ENCODE measurements at regions of chr13 and their contacts with region 1.

Region 1: DNA sequence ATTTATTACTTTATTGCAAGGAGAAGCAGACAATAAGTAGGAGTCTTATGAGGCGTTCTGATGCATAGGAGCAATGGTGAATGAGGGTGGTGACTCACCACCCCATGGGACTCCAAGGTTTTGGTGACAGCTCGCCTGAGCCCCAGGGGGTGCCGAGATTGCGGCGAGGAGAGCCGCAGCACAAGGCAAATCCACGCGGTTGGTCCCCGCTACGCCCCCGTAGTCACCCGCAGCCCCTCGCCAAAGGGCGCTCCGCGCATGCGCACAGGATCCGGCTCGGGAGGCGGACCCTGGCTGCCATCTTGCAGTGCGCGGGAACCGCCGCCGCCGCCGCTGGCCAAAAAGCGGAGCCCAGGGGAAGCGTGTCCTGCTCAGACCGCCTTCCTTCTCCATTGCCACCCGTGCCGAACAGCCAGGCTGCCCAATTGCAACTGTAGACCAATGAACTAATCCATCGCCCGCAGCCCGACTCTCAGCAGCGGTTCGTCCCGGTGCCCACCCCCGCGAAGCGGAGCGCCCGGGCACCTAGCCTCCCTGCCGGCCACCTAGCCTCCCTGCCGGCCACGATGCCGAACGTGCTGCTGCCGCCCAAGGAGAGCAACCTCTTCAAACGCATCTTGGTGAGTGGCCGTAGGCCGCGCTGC is at the start of gene NAA16:
- DNase-seq: peak; percentile 87 to 98 (median 95)
- ATAC-seq: peak; percentile 88
- H3K4me3 ChIP-seq: peak within 1 kb of the TSS; percentile 72 to 97
- H3K4me3 Mint-ChIP-seq: peak within 1 kb of the TSS; percentile 98
- H3K27ac ChIP-seq: peak within 1 kb of the TSS; percentile 72 to 83
- H3K27ac Mint-ChIP-seq: peak within 1 kb of the TSS; percentile 96
- H3K4me1 ChIP-seq: peaks cover 25% of the 10 kb centered on the region
- H3K4me1 Mint-ChIP-seq: peaks cover 41% of the 10 kb centered on the region
- H3K27me3 ChIP-seq: no peaks in the 10 kb centered on the region
- H3K27me3 Mint-ChIP-seq: no peaks in the 10 kb centered on the region
- CTCF ChIP-seq: no peak
- total RNA-seq, gene NAA16: 103 to 105 TPM

Region 2: DNA sequence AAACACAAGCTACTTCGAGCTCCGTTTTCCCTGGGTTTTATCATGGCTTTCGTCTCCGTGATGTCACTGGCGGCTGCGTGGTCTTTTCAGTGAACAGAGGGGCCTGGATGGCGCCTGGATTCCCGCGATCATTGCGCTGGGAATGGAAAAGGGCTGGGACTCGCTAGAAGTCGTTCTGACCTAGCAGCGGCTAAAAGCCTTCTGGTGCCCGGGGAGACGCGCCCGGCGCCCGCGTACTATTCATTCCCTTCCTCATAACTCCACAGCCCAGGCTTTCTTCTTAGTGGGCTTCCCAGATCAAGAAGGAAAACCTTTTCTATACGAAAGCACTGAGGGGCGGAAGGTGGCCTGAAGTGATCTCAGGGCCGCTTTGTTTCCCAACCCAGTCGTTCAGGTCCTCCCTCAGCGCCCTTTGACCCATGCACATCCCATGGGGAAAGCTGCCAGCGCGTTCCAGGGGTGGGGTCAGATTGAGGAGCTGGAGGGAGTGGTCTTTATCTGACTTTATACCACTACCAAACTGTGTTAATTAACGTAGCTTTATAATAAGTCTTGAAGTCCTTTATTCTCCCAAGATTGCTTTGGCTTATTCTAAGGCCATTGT is 388.5 kb before region 1 on chr13:
- CTCF ChIA-PET with region 1: no interaction called
- POLR2A ChIA-PET with region 1: no interaction called
- intact Hi-C with region 1: loop called in 1 of 2 experiments (anchors 10 kb)
- DNase-seq: peak in 2 of 9 experiments; percentile 17 to 30
- ATAC-seq: no peak
- H3K4me3 ChIP-seq: no peak overlapping the region
- H3K4me3 Mint-ChIP-seq: peak overlapping the region; percentile 59
- H3K27ac ChIP-seq: no peak overlapping the region
- H3K27ac Mint-ChIP-seq: peak overlapping the region; percentile 82
- H3K4me1 ChIP-seq: peaks cover 8% of the 10 kb centered on the region
- H3K4me1 Mint-ChIP-seq: peaks cover 27% of the 10 kb centered on the region
- H3K27me3 ChIP-seq: no peaks in the 10 kb centered on the region
- H3K27me3 Mint-ChIP-seq: no peaks in the 10 kb centered on the region
- CTCF ChIP-seq: no peak

Region 3: GRCh38 chr13:41193919-41194824 is 116.9 kb before region 1 on chr13 and contains the start of gene KBTBD7:
- CTCF ChIA-PET with region 1: no interaction called
- POLR2A ChIA-PET with region 1: no interaction called
- intact Hi-C with region 1: loop called in 1 of 2 experiments (anchors 1 kb)
- DNase-seq: peak; percentile 74 to 93 (median 90)
- ATAC-seq: peak; percentile 95
- H3K4me3 ChIP-seq: peak within 1 kb of the TSS; percentile 67 to 97
- H3K4me3 Mint-ChIP-seq: peak within 1 kb of the TSS; percentile 92
- H3K27ac ChIP-seq: peak within 1 kb of the TSS; percentile 53 to 68
- H3K27ac Mint-ChIP-seq: peak within 1 kb of the TSS; percentile 93
- H3K4me1 ChIP-seq: peaks cover 14% of the 10 kb centered on the region
- H3K4me1 Mint-ChIP-seq: peaks cover 39% of the 10 kb centered on the region
- H3K27me3 ChIP-seq: no peaks in the 10 kb centered on the region
- H3K27me3 Mint-ChIP-seq: no peaks in the 10 kb centered on the region
- CTCF ChIP-seq: no peak
- total RNA-seq, gene KBTBD7: 2.2 to 2.3 TPM

Region 4: GRCh38 chr13:41271456-41272285 is 39.4 kb before region 1 on chr13:
- CTCF ChIA-PET with region 1: interaction called, 3 read pairs
- POLR2A ChIA-PET with region 1: interaction called, 4 read pairs
- intact Hi-C with region 1: loop called in 1 of 2 experiments (anchors 2 kb)
- DNase-seq: peak in 5 of 9 experiments; percentile 6 to 74 (median 48)
- ATAC-seq: peak; percentile 83
- H3K4me3 ChIP-seq: peak overlapping the region in 1 of 2 experiments; percentile 12
- H3K4me3 Mint-ChIP-seq: peak overlapping the region; percentile 59
- H3K27ac ChIP-seq: peak overlapping the region; percentile 36 to 49
- H3K27ac Mint-ChIP-seq: peak overlapping the region; percentile 91
- H3K4me1 ChIP-seq: peaks cover 43% of the 10 kb centered on the region
- H3K4me1 Mint-ChIP-seq: peaks cover 38% of the 10 kb centered on the region
- H3K27me3 ChIP-seq: no peaks in the 10 kb centered on the region
- H3K27me3 Mint-ChIP-seq: no peaks in the 10 kb centered on the region
- CTCF ChIP-seq: no peak

Region 5: DNA sequence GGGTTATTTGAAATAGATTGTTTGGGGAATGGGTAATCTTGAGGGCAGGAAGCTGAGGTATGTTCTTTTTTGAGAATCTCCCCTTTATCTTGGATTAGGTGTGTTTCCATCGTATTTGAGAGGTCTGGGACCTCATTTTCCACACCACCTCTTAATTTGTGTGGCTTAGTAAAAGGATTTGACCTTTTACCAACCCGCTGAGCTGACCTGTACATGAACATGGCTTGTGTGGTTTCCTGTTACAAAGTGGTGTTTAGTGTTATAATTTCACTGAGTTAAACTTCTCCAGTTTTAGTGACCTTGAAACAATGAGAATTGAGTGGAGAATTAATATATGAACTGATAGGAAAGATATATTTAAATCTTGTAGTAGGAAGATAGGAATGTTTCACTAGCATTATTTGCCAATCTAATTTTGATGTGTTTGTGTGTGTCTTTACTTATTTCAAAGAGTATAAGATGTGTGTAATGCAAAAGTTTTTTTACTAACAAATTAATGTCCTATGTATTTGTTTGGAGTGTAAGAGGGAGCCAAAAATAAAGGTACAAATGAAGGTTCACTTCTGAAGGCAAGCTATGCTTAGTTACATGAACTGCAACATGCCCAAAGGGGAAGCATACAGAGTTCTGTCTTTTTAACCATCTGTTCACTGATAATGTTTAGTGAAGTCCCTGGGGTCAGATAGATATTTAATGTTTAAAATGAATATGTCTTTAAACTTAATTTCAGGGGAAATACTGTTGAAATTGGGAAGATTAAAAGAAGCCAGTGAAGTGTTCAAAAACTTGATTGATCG is 17.1 kb after region 1 on chr13:
- CTCF ChIA-PET with region 1: no interaction called
- POLR2A ChIA-PET with region 1: no interaction called
- intact Hi-C with region 1: loop called in 1 of 2 experiments (anchors 2 kb)
- DNase-seq: no peak
- ATAC-seq: no peak
- H3K4me3 ChIP-seq: no peak overlapping the region
- H3K4me3 Mint-ChIP-seq: peak overlapping the region; percentile 4
- H3K27ac ChIP-seq: peak overlapping the region in 1 of 2 experiments; percentile 4
- H3K27ac Mint-ChIP-seq: peak overlapping the region; percentile 64
- H3K4me1 ChIP-seq: peaks cover 43% of the 10 kb centered on the region
- H3K4me1 Mint-ChIP-seq: peaks cover 67% of the 10 kb centered on the region
- H3K27me3 ChIP-seq: no peaks in the 10 kb centered on the region
- H3K27me3 Mint-ChIP-seq: no peaks in the 10 kb centered on the region
- CTCF ChIP-seq: no peak

Region 6: DNA sequence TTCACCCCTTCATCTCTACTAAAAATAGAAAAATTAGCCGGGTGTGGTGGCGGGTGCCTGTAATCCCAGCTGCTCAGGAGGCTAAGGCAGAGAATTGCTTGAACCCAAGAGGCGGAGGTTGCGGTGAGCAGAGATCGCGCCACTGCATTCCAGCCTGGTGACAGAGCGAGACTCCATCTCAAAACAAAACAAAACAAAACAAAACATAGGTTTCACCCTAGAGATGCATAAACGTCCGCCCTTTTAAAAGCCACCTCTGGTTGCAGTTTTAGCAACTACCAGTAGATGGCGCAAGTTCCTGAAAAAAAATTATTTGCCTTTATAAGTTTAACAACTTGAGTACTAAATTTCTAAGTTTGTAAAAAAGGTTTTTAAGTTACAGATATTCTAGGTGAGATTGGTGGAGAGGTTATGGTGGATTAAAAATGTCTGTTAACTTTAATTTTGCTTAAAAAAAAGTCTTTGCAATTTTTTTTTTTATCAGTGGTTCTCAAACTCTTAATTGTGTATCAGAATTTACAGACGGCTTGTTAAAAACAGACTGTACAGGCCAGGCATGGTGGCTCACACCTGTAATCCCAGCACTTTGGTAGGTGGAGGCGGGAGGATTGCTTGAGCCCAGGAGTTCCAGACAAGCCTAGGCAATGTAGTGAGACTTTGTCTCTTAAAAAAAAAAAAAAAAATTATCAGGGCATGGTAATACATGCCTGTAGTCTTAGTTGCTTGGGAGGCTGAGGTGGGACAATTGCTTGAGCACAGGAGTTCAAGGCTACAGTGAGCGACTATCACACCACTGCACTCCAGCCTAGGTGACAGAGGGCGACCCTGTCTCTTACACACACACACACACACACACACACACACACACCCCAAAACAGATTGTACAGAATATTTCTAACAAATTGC is 42.1 kb after region 1 on chr13:
- CTCF ChIA-PET with region 1: no interaction called
- POLR2A ChIA-PET with region 1: no interaction called
- intact Hi-C with region 1: loop called in 1 of 2 experiments (anchors 2 kb)
- DNase-seq: peak; percentile 21 to 83 (median 57)
- ATAC-seq: peak; percentile 55
- H3K4me3 ChIP-seq: no peak overlapping the region
- H3K4me3 Mint-ChIP-seq: peak overlapping the region; percentile 54
- H3K27ac ChIP-seq: peak overlapping the region in 1 of 2 experiments; percentile 58
- H3K27ac Mint-ChIP-seq: peak overlapping the region; percentile 94
- H3K4me1 ChIP-seq: peaks cover 49% of the 10 kb centered on the region
- H3K4me1 Mint-ChIP-seq: peaks cover 59% of the 10 kb centered on the region
- H3K27me3 ChIP-seq: no peaks in the 10 kb centered on the region
- H3K27me3 Mint-ChIP-seq: no peaks in the 10 kb centered on the region
- CTCF ChIP-seq: peak; percentile 95

Region 7: DNA sequence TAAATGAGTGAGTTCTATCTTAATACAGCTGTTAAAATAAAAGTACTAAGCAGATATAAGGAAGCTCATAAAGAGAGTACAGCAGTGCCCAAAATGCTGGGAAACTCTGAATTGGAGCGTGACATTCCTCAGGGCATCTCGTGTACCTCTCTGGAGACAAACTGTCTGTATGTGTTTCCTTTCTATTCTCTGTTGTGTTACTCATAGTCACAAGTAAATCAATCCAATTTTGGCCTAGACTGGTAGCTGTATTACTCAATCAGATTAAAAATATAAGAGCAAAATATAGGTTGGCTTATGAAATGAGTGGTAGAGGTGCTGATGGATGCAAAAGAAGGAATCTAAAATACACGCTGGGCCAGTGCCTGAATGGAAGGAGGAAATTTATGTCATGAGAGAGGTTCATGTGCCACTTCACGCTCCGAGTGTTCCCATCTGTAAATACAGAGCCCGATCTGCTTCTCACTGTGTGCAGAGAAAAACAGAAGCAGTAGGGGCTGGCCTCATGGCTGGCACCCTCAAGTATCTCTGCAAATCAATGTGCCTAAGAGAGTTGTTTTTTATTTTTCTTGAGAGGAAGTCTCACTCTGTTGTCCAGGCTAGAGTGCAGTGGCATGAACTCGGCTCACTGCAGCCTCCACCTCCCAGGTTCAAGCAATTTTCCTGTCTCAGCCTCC is 87.5 kb after region 1 on chr13:
- CTCF ChIA-PET with region 1: no interaction called
- POLR2A ChIA-PET with region 1: no interaction called
- intact Hi-C with region 1: no loop called
- DNase-seq: no peak
- ATAC-seq: peak; percentile 20
- H3K4me3 ChIP-seq: no peak overlapping the region
- H3K4me3 Mint-ChIP-seq: no peak overlapping the region
- H3K27ac ChIP-seq: no peak overlapping the region
- H3K27ac Mint-ChIP-seq: no peak overlapping the region
- H3K4me1 ChIP-seq: no peaks in the 10 kb centered on the region
- H3K4me1 Mint-ChIP-seq: no peaks in the 10 kb centered on the region
- H3K27me3 ChIP-seq: no peaks in the 10 kb centered on the region
- H3K27me3 Mint-ChIP-seq: no peaks in the 10 kb centered on the region
- CTCF ChIP-seq: no peak

Measured in CD8-positive, alpha-beta T cell (primary cell).